ENCODE measurements at regions of chr18 and their contacts with region 1.

Region 1: DNA sequence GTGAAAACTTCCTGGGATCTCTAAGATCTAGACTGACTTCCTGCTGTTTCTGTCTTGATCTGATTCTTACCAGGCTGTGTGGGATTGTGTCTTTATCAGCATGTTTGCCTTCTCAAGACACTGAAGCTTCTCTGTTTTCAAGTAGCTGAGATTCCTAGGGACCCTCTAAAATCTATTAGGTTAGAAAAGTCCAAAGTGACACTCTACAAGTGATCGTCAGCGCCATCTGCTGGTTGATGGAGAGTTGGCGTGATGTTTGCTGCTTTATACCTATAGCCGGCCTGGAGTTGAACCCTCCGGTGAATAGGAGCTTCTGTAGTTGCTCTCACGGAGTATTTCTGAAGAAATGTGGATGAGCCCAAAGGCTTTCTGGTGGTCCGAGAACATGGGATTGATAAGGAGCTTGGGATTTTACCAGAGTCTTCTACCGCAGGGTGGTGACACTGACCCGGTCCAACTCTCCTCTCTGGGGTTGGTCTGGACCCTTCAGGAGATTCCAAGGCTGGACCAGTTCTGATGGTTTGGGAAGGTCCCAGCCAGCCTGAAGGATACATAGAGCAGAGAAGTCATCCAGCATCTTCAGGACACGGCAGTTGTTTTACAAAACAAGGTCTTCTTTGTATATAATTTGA is 96.0 kb upstream of the TTC39C start:
- DNase-seq: no peak
- H3K4me3 ChIP-seq: no peak overlapping the region
- CTCF ChIP-seq: peak; percentile 76

Region 2: GRCh38 chr18:23578891-23579653 is 339.4 kb before region 1 on chr18:
- CTCF ChIA-PET with region 1: no interaction called
- POLR2A ChIA-PET with region 1: no interaction called
- DNase-seq: no peak
- H3K4me3 ChIP-seq: no peak overlapping the region
- CTCF ChIP-seq: no peak

Region 3: DNA sequence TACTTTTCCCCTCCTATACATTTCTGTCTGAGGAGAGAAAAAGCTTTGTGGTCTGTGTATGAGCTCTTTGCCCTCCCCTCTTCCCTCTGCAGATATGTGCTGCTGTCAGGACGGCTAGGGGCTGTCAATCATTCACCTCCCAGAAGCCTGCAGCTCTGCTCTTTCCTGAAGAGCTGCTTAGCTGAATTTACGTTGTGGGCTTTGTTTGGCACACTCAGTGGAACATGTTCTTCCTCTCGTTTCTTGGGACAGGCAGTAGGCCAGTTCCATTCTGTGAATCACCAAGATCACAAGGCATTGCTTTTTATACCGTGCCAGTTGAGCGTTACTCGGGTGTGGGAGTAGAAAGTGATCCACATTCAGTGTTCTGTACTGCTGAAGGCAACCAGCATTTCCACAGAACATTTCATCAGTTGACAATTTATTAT is 92.5 kb before region 1 on chr18:
- CTCF ChIA-PET with region 1: interaction called, 19 read pairs
- POLR2A ChIA-PET with region 1: no interaction called
- DNase-seq: no peak
- H3K4me3 ChIP-seq: no peak overlapping the region
- CTCF ChIP-seq: no peak

Region 4: DNA sequence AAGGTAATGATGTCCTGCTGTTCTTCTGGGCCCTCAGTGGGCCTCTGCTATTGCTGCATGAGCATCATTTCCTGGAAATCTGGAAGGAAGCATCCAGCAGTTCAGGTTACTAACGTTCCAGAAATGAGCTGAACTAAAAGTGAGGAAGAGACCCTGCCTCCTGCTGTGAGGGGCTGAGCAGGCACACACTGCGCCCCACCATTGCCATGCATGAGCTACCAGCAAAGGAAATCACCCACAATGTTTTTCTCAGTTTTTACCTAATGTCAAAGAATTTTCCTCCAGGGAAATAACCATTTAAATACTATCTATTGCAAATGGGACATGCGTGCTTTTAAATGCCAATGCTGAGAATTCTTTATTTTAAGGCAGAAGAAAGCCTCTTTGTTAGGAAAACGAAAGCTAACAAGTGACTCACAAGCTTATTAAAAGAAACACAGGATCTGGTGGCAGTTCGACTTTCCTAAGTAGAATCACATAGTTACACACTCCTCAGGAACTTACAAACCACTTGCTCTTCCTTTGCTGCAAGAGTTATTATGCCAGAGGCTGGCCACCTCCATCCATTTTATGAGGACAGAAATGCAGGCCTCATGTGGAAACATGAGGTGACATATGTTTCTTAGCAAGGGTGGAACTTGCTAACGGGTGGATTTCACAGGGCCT is 56.6 kb before region 1 on chr18:
- CTCF ChIA-PET with region 1: interaction called, 20 read pairs
- POLR2A ChIA-PET with region 1: no interaction called
- DNase-seq: peak; percentile 88
- H3K4me3 ChIP-seq: no peak overlapping the region
- CTCF ChIP-seq: no peak

Region 5: GRCh38 chr18:23887493-23887892 is 31.0 kb before region 1 on chr18:
- CTCF ChIA-PET with region 1: interaction called, 18 read pairs
- POLR2A ChIA-PET with region 1: no interaction called
- DNase-seq: no peak
- H3K4me3 ChIP-seq: no peak overlapping the region
- CTCF ChIP-seq: no peak

Region 6: GRCh38 chr18:23935804-23936203 is 17.3 kb after region 1 on chr18:
- CTCF ChIA-PET with region 1: interaction called, 28 read pairs
- POLR2A ChIA-PET with region 1: no interaction called
- DNase-seq: no peak
- H3K4me3 ChIP-seq: no peak overlapping the region
- CTCF ChIP-seq: no peak